ENCODE measurements at regions of chr11 and their contacts with region 1.

Region 1: DNA sequence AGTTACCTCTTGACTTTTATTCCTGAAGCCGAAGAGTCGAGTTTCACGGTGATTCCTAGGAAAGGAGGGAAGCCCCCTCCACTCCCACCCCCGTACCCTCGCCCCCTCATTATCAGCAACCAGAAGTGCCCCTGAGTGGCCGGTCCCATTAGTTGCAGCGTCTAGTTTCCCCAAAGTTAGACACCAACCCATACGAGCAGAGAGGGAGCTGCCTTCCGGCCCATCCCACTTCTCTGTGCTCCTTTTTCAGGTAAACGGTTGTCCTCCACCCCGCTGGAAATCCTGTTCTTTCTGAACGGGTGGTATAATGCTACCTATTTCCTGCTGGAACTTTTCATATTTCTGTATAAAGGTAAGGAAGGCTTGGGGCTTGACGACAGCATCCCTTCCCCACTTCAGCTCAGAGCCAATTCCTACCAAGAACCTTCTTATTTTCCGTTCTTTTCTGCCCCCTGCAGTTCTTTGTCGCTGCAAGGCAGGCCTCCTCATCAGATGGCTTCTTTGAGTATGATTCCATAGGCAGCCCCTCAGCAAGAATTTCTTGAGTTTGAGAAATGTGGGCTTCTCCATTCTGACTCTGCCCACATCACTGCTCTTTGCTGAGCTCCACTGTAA is 701 bp downstream of the TMEM216 start:
- DNase-seq: no peak
- H3K4me3 Mint-ChIP-seq: peak overlapping the region; percentile 66
- H3K27ac Mint-ChIP-seq: peak overlapping the region; percentile 54
- H3K4me1 Mint-ChIP-seq: no peaks in the 10 kb centered on the region
- H3K27me3 Mint-ChIP-seq: peaks cover 20% of the 10 kb centered on the region
- CTCF ChIP-seq: no peak

Region 2: DNA sequence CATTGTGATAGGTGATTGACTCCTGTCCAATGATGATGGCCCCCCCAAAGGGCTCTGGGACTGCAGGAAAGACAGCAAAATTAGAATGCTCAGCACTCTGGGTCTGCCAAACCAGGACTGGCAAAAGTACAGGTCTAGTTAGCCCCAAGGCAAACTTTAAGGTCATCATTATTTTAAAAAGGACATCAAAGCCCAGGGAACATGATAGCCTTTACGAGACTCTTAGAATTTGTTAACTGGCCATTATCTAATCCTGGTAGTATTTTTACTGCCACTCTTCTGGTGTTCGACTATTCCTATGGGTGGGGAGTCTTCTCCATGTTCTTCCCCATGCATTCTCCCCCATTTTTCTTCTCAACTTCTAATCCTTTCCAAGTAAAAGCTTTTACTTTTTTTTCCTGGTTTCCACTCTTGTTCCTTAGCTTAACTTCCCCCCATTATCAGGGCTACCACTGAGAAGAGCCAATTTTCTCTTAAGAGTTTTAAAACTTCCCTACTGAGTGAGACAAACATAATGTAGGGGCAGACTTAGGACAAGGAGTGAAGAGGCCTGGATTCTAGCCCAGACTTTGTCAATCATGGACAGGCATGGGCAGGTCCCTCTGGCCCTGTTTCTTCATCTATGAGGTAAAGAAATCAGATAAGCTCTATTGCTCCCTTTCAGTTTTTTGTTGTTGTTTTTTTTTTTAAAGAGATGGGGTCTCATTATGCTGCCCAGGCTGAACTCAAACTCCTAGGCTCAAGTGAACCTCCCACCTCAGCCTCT is 67.3 kb before region 1 on chr11:
- CTCF ChIA-PET with region 1: interaction called, 12 read pairs
- POLR2A ChIA-PET with region 1: interaction called, 220 read pairs
- intact Hi-C with region 1: no loop called
- DNase-seq: peak; percentile 81
- H3K4me3 Mint-ChIP-seq: peak overlapping the region; percentile 63
- H3K27ac Mint-ChIP-seq: peak overlapping the region; percentile 90
- H3K4me1 Mint-ChIP-seq: peaks cover 40% of the 10 kb centered on the region
- H3K27me3 Mint-ChIP-seq: no peaks in the 10 kb centered on the region
- CTCF ChIP-seq: no peak

Region 3: GRCh38 chr11:61361686-61362541 is 31.2 kb before region 1 on chr11 and contains the starts of genes CYB561A3 and TMEM138:
- CTCF ChIA-PET with region 1: interaction called, 5 read pairs
- POLR2A ChIA-PET with region 1: interaction called, 429 read pairs
- intact Hi-C with region 1: no loop called
- DNase-seq: peak; percentile 92
- H3K4me3 Mint-ChIP-seq: peak within 1 kb of the TSS; percentile 93
- H3K27ac Mint-ChIP-seq: peak within 1 kb of the TSS; percentile 94
- H3K4me1 Mint-ChIP-seq: peaks cover 19% of the 10 kb centered on the region
- H3K27me3 Mint-ChIP-seq: no peaks in the 10 kb centered on the region
- CTCF ChIP-seq: no peak
- total RNA-seq, gene CYB561A3: 28.4 and 28.8 TPM in 2 replicates
- total RNA-seq, gene TMEM138: 39.9 and 46.5 TPM in 2 replicates

Region 4: DNA sequence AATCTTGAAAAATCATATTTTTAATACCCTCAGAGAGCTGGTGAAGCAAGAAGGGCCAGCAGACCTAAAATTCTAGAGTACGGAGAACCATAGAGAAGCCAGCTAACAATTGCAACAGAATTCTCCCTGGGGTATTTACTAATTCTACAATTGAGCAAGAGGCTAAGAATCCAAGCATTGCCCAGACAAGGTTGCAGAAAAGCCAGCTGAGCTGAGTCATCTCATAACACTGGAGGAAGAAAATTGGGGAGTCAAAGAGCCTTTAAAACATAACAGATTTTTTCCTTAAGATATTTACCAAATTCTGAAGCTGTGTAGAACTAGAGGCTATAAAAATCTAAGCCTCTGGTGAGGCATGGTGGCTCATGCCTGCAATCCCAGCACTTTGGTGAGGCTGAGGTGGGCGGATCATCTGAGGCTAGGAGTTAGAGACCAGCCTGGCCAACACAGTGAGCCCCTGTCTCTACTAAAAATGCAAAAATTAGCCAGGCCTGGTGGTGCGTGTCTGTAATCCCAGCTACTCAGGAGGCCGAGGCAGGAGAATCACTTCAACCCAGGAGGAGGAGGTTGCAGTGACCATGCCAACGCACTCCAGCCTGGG is 14.3 kb before region 1 on chr11:
- CTCF ChIA-PET with region 1: interaction called, 3 read pairs
- POLR2A ChIA-PET with region 1: interaction called, 16 read pairs
- intact Hi-C with region 1: no loop called
- DNase-seq: peak; percentile 94
- H3K4me3 Mint-ChIP-seq: no peak overlapping the region
- H3K27ac Mint-ChIP-seq: peak overlapping the region; percentile 86
- H3K4me1 Mint-ChIP-seq: peaks cover 13% of the 10 kb centered on the region
- H3K27me3 Mint-ChIP-seq: no peaks in the 10 kb centered on the region
- CTCF ChIP-seq: no peak

Region 5: GRCh38 chr11:61403658-61404057 is 10.6 kb after region 1 on chr11:
- CTCF ChIA-PET with region 1: interaction called, 3 read pairs
- POLR2A ChIA-PET with region 1: interaction called, 16 read pairs
- intact Hi-C with region 1: no loop called
- DNase-seq: no peak
- H3K4me3 Mint-ChIP-seq: no peak overlapping the region
- H3K27ac Mint-ChIP-seq: no peak overlapping the region
- H3K4me1 Mint-ChIP-seq: no peaks in the 10 kb centered on the region
- H3K27me3 Mint-ChIP-seq: no peaks in the 10 kb centered on the region
- CTCF ChIP-seq: no peak

Measured in MCF 10A (cell line).